Dorsolateral prefrontal cortex (tissue), 120 donors: ENCODE measurements at regions of chr11 and their contacts with region 1.

Region 1: DNA sequence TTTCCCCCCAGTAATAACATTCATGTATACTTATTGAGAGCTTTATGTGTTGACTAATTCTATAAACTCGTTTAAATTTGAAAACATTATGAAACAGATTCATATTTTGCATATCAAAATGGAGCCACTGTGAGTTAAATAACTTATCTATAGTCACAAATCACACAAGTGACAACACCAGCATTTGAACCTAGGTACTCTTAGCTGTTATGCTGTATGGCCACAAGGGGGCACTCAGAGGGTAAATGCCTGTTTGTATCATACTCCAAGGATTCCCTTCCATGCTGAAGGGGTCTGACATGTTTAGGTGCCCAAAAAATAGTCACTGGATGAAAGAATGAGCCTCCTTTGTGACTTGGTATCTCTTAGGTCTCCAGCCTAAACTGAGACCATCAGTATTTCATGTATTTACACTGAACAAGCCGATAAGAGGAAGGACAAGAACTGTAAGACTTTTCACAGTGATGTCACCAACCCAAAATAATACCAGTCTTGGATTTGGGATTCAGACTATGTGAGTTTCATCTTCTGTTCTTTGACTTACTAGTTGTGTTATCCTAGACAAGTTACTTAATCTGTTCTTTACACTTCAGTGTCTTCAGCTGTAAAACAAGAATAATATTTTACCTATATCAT is 12.2 kb upstream of the OR52D1 start:
- DNase-seq: peak in 2 of 10 donors; percentile 8 to 10
- H3K4me3 ChIP-seq: no peak overlapping the region
- H3K27ac ChIP-seq: no peak overlapping the region
- H3K27me3 ChIP-seq: peaks cover 0 to 8% (median 0%) of the 10 kb centered on the region in 45 donors
- CTCF ChIP-seq: peak; percentile 40 to 83 (median 69)

Region 2: DNA sequence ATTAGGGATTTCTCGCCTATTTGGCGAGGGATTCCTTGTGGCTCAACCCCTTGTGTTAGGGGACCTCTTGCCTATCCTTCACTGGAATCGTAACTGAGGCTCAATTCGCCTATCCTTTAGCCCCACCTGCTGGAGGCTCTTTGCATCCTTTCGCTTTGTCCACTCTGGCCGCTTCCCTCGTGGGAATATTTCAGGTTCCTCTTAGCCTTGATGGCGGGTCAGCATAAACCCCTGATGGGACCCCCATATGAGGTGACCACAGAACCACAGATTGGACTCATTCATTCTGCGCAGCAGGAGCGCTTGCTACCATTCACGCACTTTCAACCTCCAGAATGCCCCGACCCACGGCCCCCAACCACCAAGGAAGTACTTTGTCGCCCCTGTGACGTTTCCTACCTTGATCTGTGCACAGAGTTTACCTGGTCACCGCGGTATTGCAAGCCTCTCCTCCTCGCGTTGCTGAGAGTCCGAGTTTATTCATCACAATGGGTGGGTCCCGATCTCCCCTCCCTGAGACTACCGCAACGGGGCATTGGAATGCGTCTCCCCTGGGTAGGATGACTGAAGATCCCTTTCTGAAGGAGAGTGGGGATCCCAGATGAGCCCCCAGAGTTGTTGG is 332.3 kb after region 1 on chr11 and contains the start of gene OR52N2:
- intact Hi-C with region 1: loop called (anchors 5 to 10 kb)
- DNase-seq: peak in 9 of 10 donors; percentile 26 to 76 (median 72)
- H3K4me3 ChIP-seq: peak within 1 kb of the TSS; percentile 11 to 68 (median 51)
- H3K27ac ChIP-seq: no peak within 1 kb of the TSS
- H3K27me3 ChIP-seq: peaks cover 0 to 18% (median 0%) of the 10 kb centered on the region in 45 donors
- CTCF ChIP-seq: peak; percentile 25 to 92 (median 80)
- total RNA-seq, gene OR52N2: 0.35 to 0.47 TPM in 2 of 120 experiments, not detected in the others

Region 3: DNA sequence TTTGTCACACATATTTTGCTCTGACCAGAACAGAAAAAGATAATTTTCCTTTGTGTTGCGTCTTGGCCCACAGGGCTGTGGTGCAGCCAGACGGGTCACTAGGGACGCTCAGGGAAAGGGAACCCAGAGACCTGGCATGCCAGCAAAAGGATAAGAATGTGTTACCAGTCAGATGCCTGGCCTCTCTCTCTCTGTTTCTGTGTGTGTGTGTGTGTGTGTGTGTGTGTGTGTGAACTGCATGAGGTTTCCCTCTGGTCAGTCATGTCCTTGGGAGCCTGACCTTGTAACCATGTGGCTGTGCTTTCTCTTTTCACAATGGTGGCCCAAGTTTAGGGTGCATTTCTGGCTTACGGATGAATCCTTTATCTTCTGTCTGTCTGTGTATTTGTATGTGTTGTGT is 808.7 kb after region 1 on chr11:
- intact Hi-C with region 1: no loop called
- DNase-seq: no peak
- H3K4me3 ChIP-seq: no peak overlapping the region
- H3K27ac ChIP-seq: no peak overlapping the region
- H3K27me3 ChIP-seq: peaks cover 0 to under 1% (median 0%) of the 10 kb centered on the region in 45 donors
- CTCF ChIP-seq: no peak